HepG2 (cell line): ENCODE measurements at regions of chr1 and their contacts with region 1.

Region 1: GRCh38 chr1:92817986-92818764 is 13.7 kb upstream of the RPL5 start:
- DNase-seq: no peak
- ATAC-seq: no peak
- H3K4me3 ChIP-seq: no peak overlapping the region
- H3K27ac ChIP-seq: no peak overlapping the region
- H3K4me1 ChIP-seq: peaks cover 53% of the 10 kb centered on the region
- H3K27me3 ChIP-seq: no peaks in the 10 kb centered on the region
- CTCF ChIP-seq: peak; percentile 51
- EP300 ChIP-seq: no peak
- POLR2A ChIP-seq: no peak
- RAD21 ChIP-seq: no peak

Region 2: GRCh38 chr1:92329347-92330129 is 488.6 kb before region 1 on chr1:
- CTCF ChIA-PET with region 1: no interaction called
- POLR2A ChIA-PET with region 1: no interaction called
- in situ Hi-C with region 1: no loop called
- intact Hi-C with region 1: no loop called
- DNase-seq: no peak
- ATAC-seq: no peak
- H3K4me3 ChIP-seq: no peak overlapping the region
- H3K27ac ChIP-seq: no peak overlapping the region
- H3K4me1 ChIP-seq: peaks cover 10% of the 10 kb centered on the region; the same call in 1 of the 2 replicates
- H3K27me3 ChIP-seq: no peaks in the 10 kb centered on the region; a peak in 1 of 5 replicates
- CTCF ChIP-seq: no peak
- EP300 ChIP-seq: no peak
- POLR2A ChIP-seq: no peak
- RAD21 ChIP-seq: no peak

Region 3: GRCh38 chr1:92749024-92749634 is 69.0 kb before region 1 on chr1:
- CTCF ChIA-PET with region 1: interaction called, 3 read pairs
- POLR2A ChIA-PET with region 1: interaction called, 4 read pairs
- in situ Hi-C with region 1: loop called (anchors 5 kb)
- intact Hi-C with region 1: loop called (anchors 1 kb)
- DNase-seq: peak; percentile 62
- ATAC-seq: peak; percentile 80
- H3K4me3 ChIP-seq: no peak overlapping the region
- H3K27ac ChIP-seq: no peak overlapping the region
- H3K4me1 ChIP-seq: no peaks in the 10 kb centered on the region
- H3K27me3 ChIP-seq: no peaks in the 10 kb centered on the region
- CTCF ChIP-seq: peak; percentile 70
- EP300 ChIP-seq: no peak
- POLR2A ChIP-seq: no peak
- RAD21 ChIP-seq: peak; percentile 53; the same call in 1 of the 2 replicates

Region 4: DNA sequence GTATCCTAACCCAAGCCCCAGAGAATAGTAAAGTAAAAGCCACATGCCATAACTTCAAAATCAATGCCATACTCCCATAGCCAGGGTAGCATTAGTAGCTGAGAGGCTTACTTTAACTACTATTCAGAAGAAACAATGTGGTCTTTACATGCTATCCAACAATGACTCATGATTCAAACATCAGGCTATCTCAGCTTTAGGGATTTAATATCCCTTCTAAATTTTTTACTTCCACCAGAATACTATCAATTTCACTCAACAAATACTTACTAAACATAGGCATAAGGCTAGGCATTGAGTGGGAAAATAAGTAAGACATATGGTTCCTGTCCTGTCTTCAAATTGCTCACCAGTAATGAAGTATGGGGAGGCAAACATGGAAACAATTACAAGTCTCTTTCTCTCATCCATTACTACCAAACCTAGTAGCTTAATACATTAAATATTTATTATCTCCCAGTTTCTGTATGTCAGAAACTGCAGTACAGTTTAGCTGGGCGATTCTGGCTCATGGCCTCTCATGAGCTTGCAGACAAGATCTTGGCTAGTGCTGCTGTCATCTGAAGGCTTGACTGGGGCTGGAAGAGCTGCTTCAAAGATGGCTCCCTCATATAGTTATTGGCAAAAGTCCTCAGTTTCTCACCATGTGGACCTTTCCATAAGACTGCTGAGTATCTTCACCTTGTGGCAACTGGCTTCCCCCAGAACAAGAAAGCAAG is 64.0 kb before region 1 on chr1:
- CTCF ChIA-PET with region 1: interaction called, 3 read pairs
- POLR2A ChIA-PET with region 1: interaction called, 4 read pairs
- in situ Hi-C with region 1: loop called (anchors 5 kb)
- intact Hi-C with region 1: loop called (anchors 1 kb)
- DNase-seq: no peak
- ATAC-seq: no peak
- H3K4me3 ChIP-seq: no peak overlapping the region
- H3K27ac ChIP-seq: no peak overlapping the region
- H3K4me1 ChIP-seq: peaks cover 13% of the 10 kb centered on the region; the same call in 1 of the 2 replicates
- H3K27me3 ChIP-seq: no peaks in the 10 kb centered on the region
- CTCF ChIP-seq: no peak
- EP300 ChIP-seq: no peak
- POLR2A ChIP-seq: no peak
- RAD21 ChIP-seq: no peak

Region 5: GRCh38 chr1:92784639-92785500 is 33.3 kb before region 1 on chr1 and contains the start of gene EVI5:
- CTCF ChIA-PET with region 1: no interaction called
- POLR2A ChIA-PET with region 1: no interaction called
- in situ Hi-C with region 1: no loop called
- intact Hi-C with region 1: loop called (anchors 2 kb)
- DNase-seq: peak; percentile 92
- ATAC-seq: peak; percentile 97
- H3K4me3 ChIP-seq: peak within 1 kb of the TSS; percentile 88 to 94 (median 90)
- H3K27ac ChIP-seq: peak within 1 kb of the TSS; percentile 91
- H3K4me1 ChIP-seq: peaks cover 32% of the 10 kb centered on the region
- H3K27me3 ChIP-seq: peaks cover 0 to 1% of the 10 kb centered on the region in 2 experiments; a peak in 2 of 5 replicates
- CTCF ChIP-seq: peak; percentile 22; the same call in 1 of the 2 replicates
- EP300 ChIP-seq: no peak
- POLR2A ChIP-seq: peak; percentile 74 to 78
- RAD21 ChIP-seq: no peak; the same call in 1 of the 2 replicates
- total RNA-seq, gene EVI5: 12.6 and 17.5 TPM in 2 replicates

Region 6: DNA sequence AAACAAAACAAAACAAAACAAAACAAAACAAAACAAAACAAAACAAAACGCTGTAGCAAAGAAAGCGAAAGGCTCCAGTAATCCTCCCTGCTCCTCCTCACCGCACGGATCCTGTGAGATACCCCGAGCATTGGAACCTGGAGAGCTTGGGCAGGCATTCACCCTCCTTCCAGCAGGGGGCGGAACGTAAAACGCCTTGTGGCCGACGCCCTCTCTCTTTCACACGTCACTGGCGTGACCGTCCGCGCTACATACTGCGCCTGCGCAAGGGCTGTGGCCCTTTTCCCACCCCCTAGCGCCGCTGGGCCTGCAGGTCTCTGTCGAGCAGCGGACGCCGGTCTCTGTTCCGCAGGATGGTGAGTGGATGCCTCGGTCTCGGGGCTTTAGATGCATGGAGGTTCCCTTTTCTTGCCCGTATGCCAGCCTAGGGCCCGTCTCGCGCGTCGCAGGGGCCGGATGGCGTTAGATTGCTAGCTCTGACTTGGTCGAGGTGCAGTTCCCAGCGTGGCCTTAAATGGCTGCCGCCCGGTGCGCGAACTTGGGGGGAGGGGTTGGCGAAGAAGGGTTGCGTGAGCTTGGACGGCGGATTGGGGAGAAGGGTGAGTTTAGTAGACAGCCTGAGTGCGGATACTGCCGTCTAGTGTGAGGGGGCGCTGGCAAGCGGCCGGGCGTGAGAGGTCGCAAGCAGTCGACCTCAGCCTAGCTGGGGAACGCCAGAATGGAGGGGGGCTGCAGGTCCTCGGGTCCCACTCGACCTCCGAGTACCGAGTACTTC is 13.8 kb after region 1 on chr1 and contains the start of gene RPL5:
- CTCF ChIA-PET with region 1: no interaction called
- POLR2A ChIA-PET with region 1: interaction called, 20 read pairs
- in situ Hi-C with region 1: no loop called
- intact Hi-C with region 1: loop called (anchors 1 kb)
- DNase-seq: peak; percentile 94
- ATAC-seq: peak; percentile 94
- H3K4me3 ChIP-seq: peak within 1 kb of the TSS; percentile 94 to 100 (median 96)
- H3K27ac ChIP-seq: peak within 1 kb of the TSS; percentile 87
- H3K4me1 ChIP-seq: peaks cover 46% of the 10 kb centered on the region
- H3K27me3 ChIP-seq: no peaks in the 10 kb centered on the region; a peak in 1 of 5 replicates
- CTCF ChIP-seq: peak; percentile 97
- EP300 ChIP-seq: no peak; a peak in 1 of 4 replicates
- POLR2A ChIP-seq: peak; percentile 99 to 100
- RAD21 ChIP-seq: peak; percentile 64; the same call in 1 of the 2 replicates
- total RNA-seq, gene RPL5: 2,304 and 2,854 TPM in 2 replicates